PC-3 (cell line): ENCODE measurements at regions of chr4 and their contacts with region 1.

Region 1: GRCh38 chr4:85370430-85371032 is 104.4 kb upstream of the ARHGAP24 start:
- DNase-seq: peak; percentile 49
- ATAC-seq: peak; percentile 81
- H3K4me3 ChIP-seq: no peak overlapping the region
- H3K27ac ChIP-seq: no peak overlapping the region
- H3K4me1 ChIP-seq: no peaks in the 10 kb centered on the region
- H3K27me3 ChIP-seq: 0 out of 2 replicates have a peak, but pooled peaks cover 1% of the 10 kb centered on the region
- CTCF ChIP-seq: peak; percentile 76

Region 2: GRCh38 chr4:85084380-85085094 is 286.0 kb before region 1 on chr4:
- CTCF ChIA-PET with region 1: no interaction called
- POLR2A ChIA-PET with region 1: no interaction called
- intact Hi-C with region 1: loop called (anchors 2 kb)
- DNase-seq: peak; percentile 75
- ATAC-seq: peak; percentile 67
- H3K4me3 ChIP-seq: no peak overlapping the region
- H3K27ac ChIP-seq: no peak overlapping the region
- H3K4me1 ChIP-seq: no peaks in the 10 kb centered on the region
- H3K27me3 ChIP-seq: no peaks in the 10 kb centered on the region
- CTCF ChIP-seq: peak; percentile 69

Region 3: GRCh38 chr4:85243857-85244256 is 126.7 kb before region 1 on chr4:
- CTCF ChIA-PET with region 1: no interaction called
- POLR2A ChIA-PET with region 1: no interaction called
- intact Hi-C with region 1: no loop called
- DNase-seq: peak; percentile 3
- ATAC-seq: peak; percentile 61
- H3K4me3 ChIP-seq: no peak overlapping the region
- H3K27ac ChIP-seq: no peak overlapping the region
- H3K4me1 ChIP-seq: no peaks in the 10 kb centered on the region
- H3K27me3 ChIP-seq: no peaks in the 10 kb centered on the region
- CTCF ChIP-seq: no peak

Region 4: GRCh38 chr4:86400216-86400615 is 1029.7 kb after region 1 on chr4:
- CTCF ChIA-PET with region 1: no interaction called
- POLR2A ChIA-PET with region 1: no interaction called
- intact Hi-C with region 1: no loop called
- DNase-seq: no peak
- ATAC-seq: no peak
- H3K4me3 ChIP-seq: no peak overlapping the region
- H3K27ac ChIP-seq: no peak overlapping the region
- H3K4me1 ChIP-seq: no peaks in the 10 kb centered on the region
- H3K27me3 ChIP-seq: no peaks in the 10 kb centered on the region
- CTCF ChIP-seq: no peak